ENCODE measurements at regions of chr1 and their contacts with region 1.

Region 1: GRCh38 chr1:180542838-180543145 is 16.0 kb upstream of the OVAAL start:
- DNase-seq: no peak
- H3K4me3 ChIP-seq: no peak overlapping the region
- H3K4me3 Mint-ChIP-seq: no peak overlapping the region
- H3K27ac ChIP-seq: no peak overlapping the region
- H3K27ac Mint-ChIP-seq: no peak overlapping the region
- H3K4me1 ChIP-seq: no peaks in the 10 kb centered on the region
- H3K4me1 Mint-ChIP-seq: no peaks in the 10 kb centered on the region
- H3K27me3 ChIP-seq: no peaks in the 10 kb centered on the region
- H3K27me3 Mint-ChIP-seq: peaks cover 0 to 3% (median 3%) of the 10 kb centered on the region in 3 donors
- CTCF ChIP-seq: no peak

Region 2: GRCh38 chr1:180594723-180595122 is 51.9 kb after region 1 on chr1:
- intact Hi-C with region 1: loop called in 1 of 2 experiments (anchors 2 kb)
- DNase-seq: no peak
- H3K4me3 ChIP-seq: no peak overlapping the region
- H3K4me3 Mint-ChIP-seq: no peak overlapping the region
- H3K27ac ChIP-seq: no peak overlapping the region
- H3K27ac Mint-ChIP-seq: no peak overlapping the region
- H3K4me1 ChIP-seq: no peaks in the 10 kb centered on the region
- H3K4me1 Mint-ChIP-seq: no peaks in the 10 kb centered on the region
- H3K27me3 ChIP-seq: no peaks in the 10 kb centered on the region
- H3K27me3 Mint-ChIP-seq: peaks cover 3 to 4% (median 3%) of the 10 kb centered on the region in 3 donors
- CTCF ChIP-seq: no peak

Measured in CD14-positive monocyte (primary cell).